CD4-positive, alpha-beta T cell (primary cell): ENCODE measurements at regions of chr7 and their contacts with region 1.

Region 1: GRCh38 chr7:35624299-35625186 is 70.4 kb downstream of the HERPUD2 start:
- DNase-seq: peak; percentile 5 to 71 (median 20)
- ATAC-seq: peak; percentile 92
- H3K4me3 ChIP-seq: no peak overlapping the region
- H3K4me3 Mint-ChIP-seq: no peak overlapping the region
- H3K27ac ChIP-seq: no peak overlapping the region
- H3K27ac Mint-ChIP-seq: no peak overlapping the region
- H3K4me1 ChIP-seq: peaks cover 5% of the 10 kb centered on the region
- H3K4me1 Mint-ChIP-seq: peaks cover 5% of the 10 kb centered on the region
- H3K27me3 ChIP-seq: no peaks in the 10 kb centered on the region
- H3K27me3 Mint-ChIP-seq: no peaks in the 10 kb centered on the region
- CTCF ChIP-seq: peak; percentile 80

Region 2: GRCh38 chr7:34823640-34824258 is 800.8 kb before region 1 on chr7:
- CTCF ChIA-PET with region 1: no interaction called
- POLR2A ChIA-PET with region 1: no interaction called
- intact Hi-C with region 1: loop called (anchors 5 to 10 kb)
- DNase-seq: peak; percentile 16 to 68 (median 47)
- ATAC-seq: peak; percentile 51
- H3K4me3 ChIP-seq: no peak overlapping the region
- H3K4me3 Mint-ChIP-seq: no peak overlapping the region
- H3K27ac ChIP-seq: no peak overlapping the region
- H3K27ac Mint-ChIP-seq: no peak overlapping the region
- H3K4me1 ChIP-seq: no peaks in the 10 kb centered on the region
- H3K4me1 Mint-ChIP-seq: no peaks in the 10 kb centered on the region
- H3K27me3 ChIP-seq: no peaks in the 10 kb centered on the region
- H3K27me3 Mint-ChIP-seq: no peaks in the 10 kb centered on the region
- CTCF ChIP-seq: peak; percentile 93

Region 3: GRCh38 chr7:35185907-35186731 is 438.4 kb before region 1 on chr7:
- CTCF ChIA-PET with region 1: no interaction called
- POLR2A ChIA-PET with region 1: no interaction called
- intact Hi-C with region 1: loop called in 1 of 2 experiments (anchors 10 kb)
- DNase-seq: peak in 1 of 14 experiments; percentile 4
- ATAC-seq: no peak
- H3K4me3 ChIP-seq: no peak overlapping the region
- H3K4me3 Mint-ChIP-seq: peak overlapping the region; percentile 11
- H3K27ac ChIP-seq: no peak overlapping the region
- H3K27ac Mint-ChIP-seq: no peak overlapping the region
- H3K4me1 ChIP-seq: no peaks in the 10 kb centered on the region
- H3K4me1 Mint-ChIP-seq: peaks cover 11% of the 10 kb centered on the region
- H3K27me3 ChIP-seq: peaks cover 0 to 6% of the 10 kb centered on the region in 2 experiments
- H3K27me3 Mint-ChIP-seq: peaks cover 44% of the 10 kb centered on the region
- CTCF ChIP-seq: no peak

Region 4: DNA sequence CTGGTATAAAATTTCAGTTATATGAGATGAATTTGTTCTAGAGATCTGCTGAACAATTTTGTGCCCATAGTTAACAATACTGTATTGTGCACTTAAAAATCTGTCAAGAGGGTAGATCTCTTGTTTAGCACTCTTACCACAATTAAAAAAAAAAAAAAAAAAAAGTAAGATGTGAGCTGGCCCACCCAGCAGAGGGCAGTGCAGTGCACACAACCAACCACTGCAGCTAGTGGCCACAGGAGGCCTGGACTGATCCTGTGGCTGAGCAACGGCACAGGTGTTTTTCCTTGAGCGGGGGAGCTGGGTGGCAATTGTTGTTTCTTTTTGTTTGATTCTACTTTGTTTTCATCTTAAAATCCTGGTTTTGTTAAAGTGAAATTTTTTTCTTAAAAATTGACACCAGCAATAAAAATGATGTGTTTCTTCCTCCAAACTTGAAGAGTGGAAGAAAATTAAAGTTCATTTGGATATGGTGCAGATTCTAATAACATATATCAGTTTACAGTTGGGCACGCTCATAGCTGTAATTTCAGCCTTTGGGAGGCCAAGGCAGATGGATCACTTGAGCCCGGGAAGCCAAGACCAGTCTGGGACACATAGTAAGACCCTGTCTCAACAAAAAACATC is 199.6 kb before region 1 on chr7:
- CTCF ChIA-PET with region 1: interaction called, 4 read pairs
- POLR2A ChIA-PET with region 1: no interaction called
- intact Hi-C with region 1: loop called (anchors 2 to 5 kb)
- DNase-seq: peak; percentile 17 to 78 (median 36)
- ATAC-seq: peak; percentile 76
- H3K4me3 ChIP-seq: no peak overlapping the region
- H3K4me3 Mint-ChIP-seq: no peak overlapping the region
- H3K27ac ChIP-seq: no peak overlapping the region
- H3K27ac Mint-ChIP-seq: no peak overlapping the region
- H3K4me1 ChIP-seq: no peaks in the 10 kb centered on the region
- H3K4me1 Mint-ChIP-seq: peaks cover 9% of the 10 kb centered on the region
- H3K27me3 ChIP-seq: peaks cover 0 to 5% of the 10 kb centered on the region in 2 experiments
- H3K27me3 Mint-ChIP-seq: peaks cover 37% of the 10 kb centered on the region
- CTCF ChIP-seq: peak; percentile 70

Region 5: DNA sequence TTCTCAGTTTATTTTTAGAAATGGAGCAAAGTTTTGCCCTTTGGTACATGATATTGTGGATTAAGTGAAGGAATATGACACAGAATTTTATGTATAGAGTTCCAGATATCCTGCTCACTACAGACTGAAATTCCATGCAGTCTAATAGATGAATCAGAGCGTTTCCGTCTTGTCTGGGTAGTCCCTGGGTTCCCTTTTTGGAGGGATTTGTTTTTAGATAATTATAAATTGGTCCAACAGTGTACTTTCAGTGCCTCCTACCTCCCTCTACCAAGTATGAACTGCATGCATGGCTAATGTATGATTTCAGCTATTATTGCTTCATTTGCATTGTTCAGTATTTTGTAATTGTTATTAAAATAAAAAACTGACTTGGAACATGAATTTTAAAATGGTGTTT is 250.7 kb after region 1 on chr7:
- CTCF ChIA-PET with region 1: no interaction called
- POLR2A ChIA-PET with region 1: no interaction called
- intact Hi-C with region 1: no loop called
- DNase-seq: no peak
- ATAC-seq: no peak
- H3K4me3 ChIP-seq: no peak overlapping the region
- H3K4me3 Mint-ChIP-seq: no peak overlapping the region
- H3K27ac ChIP-seq: no peak overlapping the region
- H3K27ac Mint-ChIP-seq: no peak overlapping the region
- H3K4me1 ChIP-seq: no peaks in the 10 kb centered on the region
- H3K4me1 Mint-ChIP-seq: peaks cover 26% of the 10 kb centered on the region
- H3K27me3 ChIP-seq: no peaks in the 10 kb centered on the region
- H3K27me3 Mint-ChIP-seq: no peaks in the 10 kb centered on the region
- CTCF ChIP-seq: no peak